B cell (primary cell): ENCODE measurements at regions of chr10 and their contacts with region 1.

Region 1: DNA sequence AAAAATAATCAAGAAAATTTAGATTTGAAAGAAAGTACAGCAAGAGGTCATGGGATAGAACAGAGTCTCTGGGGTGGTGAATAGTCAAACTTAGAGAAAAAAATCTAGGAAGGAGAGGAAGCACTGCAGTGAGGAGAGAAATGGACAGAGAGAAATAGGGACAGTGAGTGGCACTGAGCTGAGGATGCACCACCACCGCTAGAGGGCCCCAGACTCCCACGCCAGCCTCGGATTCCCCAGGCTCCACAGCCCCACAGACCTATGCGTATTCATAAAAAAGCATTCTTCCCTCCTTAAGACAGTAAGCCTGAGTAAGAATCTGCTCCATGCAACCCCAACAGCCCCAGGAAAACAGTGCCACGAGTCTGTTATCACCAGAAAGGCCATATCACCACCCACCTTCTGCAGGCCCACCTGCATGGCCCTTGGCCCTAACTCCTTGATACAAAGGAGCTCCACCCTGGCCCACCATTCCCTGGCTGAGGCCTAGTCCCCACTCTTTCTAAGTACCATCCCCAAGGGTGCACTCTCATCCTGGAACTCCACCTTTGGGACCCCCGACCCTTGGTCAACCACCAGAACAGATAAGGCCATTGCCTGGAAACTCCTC is 91.0 kb downstream of the ALOX5 start:
- DNase-seq: peak; percentile 83
- ATAC-seq: peak; percentile 69
- H3K4me3 ChIP-seq: peak overlapping the region in 3 of 5 experiments; percentile 1 to 24 (median 10)
- H3K4me3 Mint-ChIP-seq: peak overlapping the region; percentile 42
- H3K27ac ChIP-seq: no peak overlapping the region
- H3K27ac Mint-ChIP-seq: peak overlapping the region; percentile 93
- H3K4me1 ChIP-seq: peaks cover 69 to 72% of the 10 kb centered on the region in 2 donors
- H3K4me1 Mint-ChIP-seq: peaks cover 89% of the 10 kb centered on the region
- H3K27me3 ChIP-seq: no peaks in the 10 kb centered on the region
- H3K27me3 Mint-ChIP-seq: no peaks in the 10 kb centered on the region
- CTCF ChIP-seq: peak; percentile 92

Region 2: GRCh38 chr10:45308707-45309106 is 156.4 kb before region 1 on chr10:
- CTCF ChIA-PET with region 1: interaction called, 8 read pairs
- POLR2A ChIA-PET with region 1: no interaction called
- intact Hi-C with region 1: loop called (anchors 5 kb)
- DNase-seq: peak; percentile 28
- ATAC-seq: peak; percentile 17
- H3K4me3 ChIP-seq: no peak overlapping the region
- H3K4me3 Mint-ChIP-seq: no peak overlapping the region
- H3K27ac ChIP-seq: no peak overlapping the region
- H3K27ac Mint-ChIP-seq: no peak overlapping the region
- H3K4me1 ChIP-seq: no peaks in the 10 kb centered on the region
- H3K4me1 Mint-ChIP-seq: no peaks in the 10 kb centered on the region
- H3K27me3 ChIP-seq: no peaks in the 10 kb centered on the region
- H3K27me3 Mint-ChIP-seq: peaks cover 7% of the 10 kb centered on the region
- CTCF ChIP-seq: peak; percentile 24

Region 3: GRCh38 chr10:45420453-45421192 is 44.4 kb before region 1 on chr10:
- CTCF ChIA-PET with region 1: interaction called, 18 read pairs
- POLR2A ChIA-PET with region 1: interaction called, 28 read pairs
- intact Hi-C with region 1: loop called (anchors 1 kb)
- DNase-seq: peak; percentile 72
- ATAC-seq: peak; percentile 54
- H3K4me3 ChIP-seq: peak overlapping the region; percentile 15 to 75 (median 32)
- H3K4me3 Mint-ChIP-seq: peak overlapping the region; percentile 97
- H3K27ac ChIP-seq: peak overlapping the region; percentile 84 to 85
- H3K27ac Mint-ChIP-seq: peak overlapping the region; percentile 94
- H3K4me1 ChIP-seq: peaks cover 49 to 60% of the 10 kb centered on the region in 2 donors
- H3K4me1 Mint-ChIP-seq: peaks cover 67% of the 10 kb centered on the region
- H3K27me3 ChIP-seq: no peaks in the 10 kb centered on the region
- H3K27me3 Mint-ChIP-seq: no peaks in the 10 kb centered on the region
- CTCF ChIP-seq: no peak

Region 4: GRCh38 chr10:45569471-45569870 is 104.4 kb after region 1 on chr10:
- CTCF ChIA-PET with region 1: no interaction called
- POLR2A ChIA-PET with region 1: no interaction called
- intact Hi-C with region 1: no loop called
- DNase-seq: no peak
- ATAC-seq: no peak
- H3K4me3 ChIP-seq: no peak overlapping the region
- H3K4me3 Mint-ChIP-seq: no peak overlapping the region
- H3K27ac ChIP-seq: no peak overlapping the region
- H3K27ac Mint-ChIP-seq: no peak overlapping the region
- H3K4me1 ChIP-seq: no peaks in the 10 kb centered on the region
- H3K4me1 Mint-ChIP-seq: peaks cover 30% of the 10 kb centered on the region
- H3K27me3 ChIP-seq: no peaks in the 10 kb centered on the region
- H3K27me3 Mint-ChIP-seq: no peaks in the 10 kb centered on the region
- CTCF ChIP-seq: no peak

Region 5: GRCh38 chr10:45580371-45581215 is 115.5 kb after region 1 on chr10:
- CTCF ChIA-PET with region 1: interaction called, 13 read pairs
- POLR2A ChIA-PET with region 1: interaction called, 4 read pairs
- intact Hi-C with region 1: no loop called
- DNase-seq: peak; percentile 65
- ATAC-seq: peak; percentile 79
- H3K4me3 ChIP-seq: peak overlapping the region; percentile 40 to 79 (median 59)
- H3K4me3 Mint-ChIP-seq: peak overlapping the region; percentile 95
- H3K27ac ChIP-seq: peak overlapping the region; percentile 92 to 93
- H3K27ac Mint-ChIP-seq: peak overlapping the region; percentile 95
- H3K4me1 ChIP-seq: peaks cover 19 to 36% of the 10 kb centered on the region in 2 donors
- H3K4me1 Mint-ChIP-seq: peaks cover 50% of the 10 kb centered on the region
- H3K27me3 ChIP-seq: no peaks in the 10 kb centered on the region
- H3K27me3 Mint-ChIP-seq: no peaks in the 10 kb centered on the region
- CTCF ChIP-seq: no peak

Region 6: DNA sequence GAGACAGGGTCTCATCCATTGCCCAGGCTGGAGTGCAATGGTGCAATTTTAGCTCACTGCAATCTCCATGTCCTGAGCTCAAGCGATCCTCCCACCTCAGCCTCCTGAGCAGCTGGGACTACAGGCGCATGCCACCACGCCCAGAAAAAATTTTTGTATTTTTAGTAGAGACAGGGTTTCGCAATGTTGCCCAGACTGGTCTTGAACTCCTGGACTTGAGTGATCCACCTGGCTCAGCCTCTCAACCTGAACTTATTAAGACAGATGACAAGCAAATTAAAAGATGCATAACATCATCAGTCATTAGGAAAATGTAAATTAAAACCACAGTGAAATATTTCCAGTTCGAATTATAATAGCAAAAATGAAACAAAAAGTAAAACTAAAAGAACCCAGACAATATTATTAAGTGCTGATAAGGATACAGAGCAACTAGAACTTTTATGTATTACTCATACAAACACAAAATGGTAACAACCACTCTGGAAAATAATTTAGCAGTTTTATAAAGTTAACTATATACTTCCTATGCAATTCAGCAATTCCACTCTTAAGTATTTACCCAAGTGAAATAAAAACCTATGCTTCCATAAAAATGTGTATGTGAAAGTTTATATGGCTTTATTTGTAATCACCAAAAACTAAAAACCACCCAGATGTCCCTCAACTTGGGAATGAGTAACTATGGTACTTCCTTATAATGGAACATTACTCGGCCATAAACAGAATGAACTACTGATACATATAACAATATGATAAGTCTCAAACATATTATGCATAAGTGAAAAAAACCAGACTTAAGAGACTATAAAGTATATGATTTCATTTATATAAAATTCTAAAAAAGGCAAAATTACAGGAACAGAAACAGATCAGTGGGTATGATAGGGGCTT is 192.2 kb after region 1 on chr10:
- CTCF ChIA-PET with region 1: no interaction called
- POLR2A ChIA-PET with region 1: no interaction called
- intact Hi-C with region 1: loop called (anchors 5 kb)
- DNase-seq: no peak
- ATAC-seq: no peak
- H3K4me3 ChIP-seq: no peak overlapping the region
- H3K4me3 Mint-ChIP-seq: no peak overlapping the region
- H3K27ac ChIP-seq: no peak overlapping the region
- H3K27ac Mint-ChIP-seq: peak overlapping the region; percentile 53
- H3K4me1 ChIP-seq: peaks cover 5 to 10% of the 10 kb centered on the region in 2 donors
- H3K4me1 Mint-ChIP-seq: peaks cover 40% of the 10 kb centered on the region
- H3K27me3 ChIP-seq: no peaks in the 10 kb centered on the region
- H3K27me3 Mint-ChIP-seq: no peaks in the 10 kb centered on the region
- CTCF ChIP-seq: no peak

Region 7: GRCh38 chr10:46030091-46030937 is 565.3 kb after region 1 on chr10 and contains the start of gene NCOA4:
- CTCF ChIA-PET with region 1: no interaction called
- POLR2A ChIA-PET with region 1: no interaction called
- intact Hi-C with region 1: loop called (anchors 5 kb)
- DNase-seq: peak; percentile 97
- ATAC-seq: peak; percentile 98
- H3K4me3 ChIP-seq: peak within 1 kb of the TSS; percentile 57 to 97 (median 96)
- H3K4me3 Mint-ChIP-seq: peak within 1 kb of the TSS; percentile 95
- H3K27ac ChIP-seq: peak within 1 kb of the TSS; percentile 80 to 97
- H3K27ac Mint-ChIP-seq: peak within 1 kb of the TSS; percentile 91
- H3K4me1 ChIP-seq: peaks cover 26 to 38% of the 10 kb centered on the region in 2 donors
- H3K4me1 Mint-ChIP-seq: peaks cover 44% of the 10 kb centered on the region
- H3K27me3 ChIP-seq: no peaks in the 10 kb centered on the region
- H3K27me3 Mint-ChIP-seq: peaks cover 4% of the 10 kb centered on the region
- CTCF ChIP-seq: peak; percentile 78
- total RNA-seq, gene NCOA4: 69.7 and 71.2 TPM in 2 replicates